ENCODE measurements at regions of chr17 and their contacts with region 1.

Region 1: GRCh38 chr17:78589885-78590284 is 12.7 kb upstream of the DNAH17 start:
- DNase-seq: peak; percentile 43
- ATAC-seq: no peak
- H3K4me3 ChIP-seq: no peak overlapping the region
- H3K27ac ChIP-seq: no peak overlapping the region
- H3K4me1 ChIP-seq: peaks cover 24% of the 10 kb centered on the region
- H3K27me3 ChIP-seq: peaks cover 26% of the 10 kb centered on the region; the same call in 1 of the 2 replicates
- CTCF ChIP-seq: no peak

Region 2: DNA sequence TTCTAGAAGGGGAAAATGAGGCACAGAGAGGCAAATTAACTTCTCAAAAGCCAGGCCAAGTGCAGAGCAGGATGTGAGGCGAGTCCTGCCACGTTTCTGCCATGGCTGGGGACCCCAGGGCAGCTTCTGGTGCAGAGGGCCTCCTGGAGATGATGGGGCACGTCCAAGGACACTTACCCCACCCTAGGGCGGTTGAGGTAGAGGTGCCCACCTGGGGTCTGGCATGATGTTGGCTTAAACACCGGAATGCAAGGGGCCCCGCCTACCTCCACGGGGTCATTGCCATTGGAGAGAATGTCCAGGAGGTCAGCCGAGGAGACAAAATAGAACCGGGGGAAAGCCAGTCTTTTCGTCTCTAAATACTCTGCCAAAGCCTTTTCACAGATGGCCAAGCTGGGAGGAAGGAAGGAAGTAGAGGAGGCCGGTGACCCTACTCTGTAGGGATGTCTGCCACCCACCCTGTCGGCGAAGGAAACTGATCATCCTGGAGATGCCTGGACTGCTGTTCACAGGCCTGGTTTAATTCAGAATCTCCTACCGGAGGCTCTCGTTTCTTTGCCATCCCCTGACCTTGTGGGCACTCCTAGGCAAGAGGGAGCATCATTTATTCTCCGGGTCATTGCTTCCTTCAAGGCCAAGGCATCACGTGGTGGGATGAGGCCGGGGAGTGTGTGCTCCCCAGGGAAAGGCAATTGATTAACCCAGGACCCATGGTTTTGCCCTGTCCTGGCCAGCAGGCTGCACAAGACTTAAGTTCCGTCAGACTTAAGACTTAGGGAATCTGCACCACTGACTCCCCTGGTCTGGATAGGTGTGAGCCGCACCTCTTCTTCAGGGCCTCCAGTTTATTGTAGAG is 83.2 kb before region 1 on chr17:
- CTCF ChIA-PET with region 1: no interaction called
- POLR2A ChIA-PET with region 1: no interaction called
- intact Hi-C with region 1: loop called (anchors 5 kb)
- DNase-seq: no peak
- ATAC-seq: no peak
- H3K4me3 ChIP-seq: no peak overlapping the region
- H3K27ac ChIP-seq: no peak overlapping the region
- H3K4me1 ChIP-seq: peaks cover 10% of the 10 kb centered on the region
- H3K27me3 ChIP-seq: peaks cover 12% of the 10 kb centered on the region
- CTCF ChIP-seq: no peak